ENCODE measurements at regions of chr20 and their contacts with region 1.

Region 1: GRCh38 chr20:23366384-23366783 is 4.4 kb downstream of the GZF1 start:
- DNase-seq: no peak
- ATAC-seq: peak; percentile 7
- H3K4me3 Mint-ChIP-seq: no peak overlapping the region
- H3K27ac Mint-ChIP-seq: peak overlapping the region; percentile 59
- H3K4me1 Mint-ChIP-seq: peaks cover 51% of the 10 kb centered on the region
- H3K27me3 Mint-ChIP-seq: no peaks in the 10 kb centered on the region

Region 2: GRCh38 chr20:23257848-23258746 is 108.3 kb before region 1 on chr20:
- CTCF ChIA-PET with region 1: no interaction called
- POLR2A ChIA-PET with region 1: no interaction called
- intact Hi-C with region 1: no loop called
- DNase-seq: no peak
- ATAC-seq: no peak
- H3K4me3 Mint-ChIP-seq: no peak overlapping the region
- H3K27ac Mint-ChIP-seq: no peak overlapping the region
- H3K4me1 Mint-ChIP-seq: peaks cover 3% of the 10 kb centered on the region
- H3K27me3 Mint-ChIP-seq: peaks cover 6% of the 10 kb centered on the region

Region 3: GRCh38 chr20:23399568-23400241 is 33.3 kb after region 1 on chr20:
- CTCF ChIA-PET with region 1: interaction called, 3 read pairs
- POLR2A ChIA-PET with region 1: no interaction called
- intact Hi-C with region 1: loop called (anchors 1 kb)
- DNase-seq: peak; percentile 38
- ATAC-seq: peak; percentile 93
- H3K4me3 Mint-ChIP-seq: no peak overlapping the region
- H3K27ac Mint-ChIP-seq: no peak overlapping the region
- H3K4me1 Mint-ChIP-seq: peaks cover 36% of the 10 kb centered on the region
- H3K27me3 Mint-ChIP-seq: no peaks in the 10 kb centered on the region